Activated CD4-positive, alpha-beta T cell treated with anti-CD3 and anti-CD28 coated beads, Interleukin-2, amount 10 ng/mL, durations not matched to agents 7 days and 5 days (primary cell): ENCODE measurements at regions of chr11 and their contacts with region 1.

Region 1: DNA sequence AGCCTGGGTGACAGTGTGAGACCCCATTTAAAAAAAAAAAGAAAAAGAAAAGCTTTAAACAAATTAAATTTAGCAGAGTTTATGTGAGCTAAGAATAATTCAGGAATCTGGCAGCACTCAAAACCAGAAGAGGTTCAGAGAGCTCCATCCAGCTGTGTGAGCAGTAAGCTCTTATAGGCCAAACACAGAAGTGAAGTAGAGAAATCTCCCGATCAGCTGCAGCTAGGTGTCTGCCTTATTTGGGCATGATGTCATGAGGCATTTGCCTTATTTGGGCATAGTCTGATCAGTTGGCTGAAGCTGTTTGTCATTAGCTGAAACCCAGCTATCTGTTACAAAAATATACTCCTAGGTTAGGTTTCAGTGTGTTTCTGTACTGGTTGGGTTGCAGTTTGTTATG is 8.2 kb downstream of the MS4A15 start:
- DNase-seq: no peak
- H3K4me3 Mint-ChIP-seq: no peak overlapping the region
- H3K27ac Mint-ChIP-seq: no peak overlapping the region
- H3K4me1 Mint-ChIP-seq: no peaks in the 10 kb centered on the region
- H3K27me3 Mint-ChIP-seq: peaks cover 7% of the 10 kb centered on the region

Region 2: DNA sequence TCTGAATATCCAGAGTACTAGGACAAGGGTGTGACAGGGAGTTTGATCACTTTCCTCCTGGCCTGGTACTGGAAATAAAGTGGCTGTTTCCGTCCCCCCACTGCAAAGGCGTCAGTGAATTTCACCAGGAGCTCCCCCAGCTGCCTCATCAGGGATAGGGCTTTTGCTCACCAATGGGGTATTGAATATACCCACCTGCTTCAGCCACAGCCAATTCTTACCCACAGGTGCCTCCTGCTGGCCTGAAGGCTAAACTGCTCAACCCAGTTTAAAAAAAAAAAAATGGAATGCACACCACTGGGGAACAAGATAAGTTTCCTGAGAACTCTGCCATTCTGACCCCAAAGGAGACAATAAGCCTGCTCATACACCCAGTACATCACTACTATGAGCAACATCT is 130.8 kb before region 1 on chr11:
- CTCF ChIA-PET with region 1: no interaction called
- POLR2A ChIA-PET with region 1: no interaction called
- DNase-seq: no peak
- H3K4me3 Mint-ChIP-seq: no peak overlapping the region
- H3K27ac Mint-ChIP-seq: no peak overlapping the region
- H3K4me1 Mint-ChIP-seq: peaks cover 3% of the 10 kb centered on the region
- H3K27me3 Mint-ChIP-seq: no peaks in the 10 kb centered on the region

Region 3: DNA sequence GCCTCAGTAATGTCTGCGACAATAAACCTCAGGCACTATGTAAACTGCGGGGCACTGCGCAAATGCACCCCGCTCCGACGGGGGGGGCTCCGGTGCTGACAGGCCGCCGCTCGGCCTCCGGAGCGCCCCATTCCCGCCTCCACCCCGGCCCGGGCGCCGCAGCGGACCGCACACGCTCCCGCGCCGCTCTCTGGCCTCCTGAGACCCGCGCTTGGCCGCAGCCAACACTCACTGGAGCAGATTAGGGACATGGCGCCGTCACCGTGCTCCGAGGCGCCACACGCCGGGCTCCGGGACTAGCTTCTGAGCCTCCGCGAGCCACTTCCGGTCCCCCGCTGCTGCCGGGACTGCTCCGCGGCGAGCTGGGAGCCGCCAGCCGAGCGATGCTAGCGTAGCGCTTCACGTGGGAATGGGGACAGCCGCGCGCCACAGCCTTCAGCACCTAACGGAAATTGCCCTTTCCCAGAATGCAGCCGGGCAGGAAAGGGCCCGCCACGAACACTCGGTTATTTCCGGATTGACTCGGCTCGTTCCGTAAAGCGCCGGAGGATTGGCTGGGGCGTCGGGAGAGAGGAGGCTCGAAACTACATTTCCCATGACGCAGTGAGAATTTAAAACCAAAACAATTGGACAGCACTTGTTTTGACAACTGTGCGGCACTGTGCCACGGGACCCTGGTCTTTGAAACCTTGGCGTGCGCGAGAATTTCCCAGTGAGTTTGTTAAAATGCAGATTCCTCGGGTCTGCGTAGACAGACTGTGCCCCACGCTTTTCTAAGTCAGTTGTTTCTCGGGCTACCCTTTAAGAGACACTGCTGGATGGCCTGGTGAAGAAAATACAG is 141.5 kb after region 1 on chr11 and contains the start of gene PRPF19:
- CTCF ChIA-PET with region 1: no interaction called
- POLR2A ChIA-PET with region 1: interaction called, 13 read pairs
- DNase-seq: peak; percentile 99
- H3K4me3 Mint-ChIP-seq: peak within 1 kb of the TSS; percentile 80
- H3K27ac Mint-ChIP-seq: peak within 1 kb of the TSS; percentile 96
- H3K4me1 Mint-ChIP-seq: peaks cover 40% of the 10 kb centered on the region
- H3K27me3 Mint-ChIP-seq: peaks cover 9% of the 10 kb centered on the region
- total RNA-seq, gene PRPF19: 125 to 128 TPM